ENCODE measurements at regions of chr13 and their contacts with region 1.

Region 1: DNA sequence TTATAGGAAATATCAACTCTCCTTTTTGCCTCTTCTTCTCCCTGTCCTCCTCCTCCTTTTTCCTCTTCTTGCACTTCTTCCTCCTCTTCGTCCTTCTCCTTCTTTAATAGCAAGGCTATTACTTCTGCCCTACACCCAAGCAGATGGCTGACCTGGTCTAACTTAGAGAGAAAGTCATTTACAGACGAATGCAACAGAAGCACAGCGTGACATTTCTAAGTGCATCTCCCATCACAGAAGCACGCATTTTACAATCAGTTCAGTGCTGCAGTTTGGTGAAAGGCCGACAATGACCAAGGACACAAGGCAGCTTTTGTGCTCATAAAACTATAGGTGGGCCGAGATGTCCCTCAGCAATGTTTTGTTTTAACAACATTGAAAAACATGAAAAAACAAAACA is 231.6 kb downstream of the FGF14 start:
- DNase-seq: no peak
- CTCF ChIP-seq: no peak

Region 2: GRCh38 chr13:102466610-102467190 is 296.4 kb after region 1 on chr13:
- in situ Hi-C with region 1: loop called (anchors 25 kb)
- DNase-seq: no peak
- CTCF ChIP-seq: no peak

Measured in GM13976 (cell line).